Sigmoid colon (tissue), 7 donors: ENCODE measurements at regions of chr17 and their contacts with region 1.

Region 1: GRCh38 chr17:2172077-2172851 is 117.4 kb downstream of the HIC1 start:
- DNase-seq: peak; percentile 96
- H3K4me3 ChIP-seq: peak overlapping the region in 2 of 4 donors; percentile 7 to 29
- H3K27ac ChIP-seq: peak overlapping the region; percentile 82 to 95 (median 89)
- H3K4me1 ChIP-seq: peaks cover 0 to 63% (median 60%) of the 10 kb centered on the region in 4 donors
- H3K27me3 ChIP-seq: no peaks in the 10 kb centered on the region
- CTCF ChIP-seq: no peak
- EP300 ChIP-seq: peak in 3 of 4 donors; percentile 45 to 78 (median 73)
- POLR2A ChIP-seq: no peak

Region 2: GRCh38 chr17:2011411-2012371 is 160.6 kb before region 1 on chr17:
- intact Hi-C with region 1: no loop called
- DNase-seq: no peak
- H3K4me3 ChIP-seq: no peak overlapping the region
- H3K27ac ChIP-seq: peak overlapping the region; percentile 4 to 62 (median 24)
- H3K4me1 ChIP-seq: no peaks in the 10 kb centered on the region
- H3K27me3 ChIP-seq: peaks cover 0 to 8% (median 0%) of the 10 kb centered on the region in 3 donors
- CTCF ChIP-seq: no peak
- EP300 ChIP-seq: no peak
- POLR2A ChIP-seq: no peak

Region 3: DNA sequence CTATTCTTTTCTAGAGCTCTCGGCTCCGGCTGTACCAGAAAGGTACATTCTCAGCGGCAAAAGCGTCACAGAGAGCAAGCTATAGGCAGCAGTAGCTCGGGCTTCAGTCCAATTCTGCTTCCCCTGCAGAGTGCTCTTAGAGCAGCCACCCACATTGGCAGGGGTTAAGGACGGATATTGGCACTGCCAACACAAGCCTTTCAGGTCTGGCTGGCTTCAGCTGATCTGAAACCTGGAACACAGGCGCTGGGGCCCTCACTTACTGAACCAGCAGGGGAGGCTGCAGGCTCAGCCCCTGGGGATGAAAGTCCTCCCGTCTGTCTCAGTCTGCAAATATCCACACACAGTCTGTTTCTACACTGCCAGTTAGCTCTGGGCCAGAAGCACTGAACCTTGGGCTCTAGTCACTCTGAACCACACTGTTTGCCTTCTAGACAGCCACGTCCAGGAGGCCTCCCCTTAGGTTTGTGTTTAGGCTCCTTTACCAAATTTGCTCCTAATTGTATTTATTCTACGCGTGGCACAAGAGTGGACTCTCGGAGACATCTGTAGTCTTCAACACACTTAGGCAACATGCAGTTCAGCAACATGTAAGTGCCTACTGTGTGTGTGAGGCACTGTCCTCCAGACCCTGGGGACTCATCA is 77.3 kb before region 1 on chr17:
- intact Hi-C with region 1: loop called (anchors 5 kb)
- DNase-seq: peak; percentile 81
- H3K4me3 ChIP-seq: no peak overlapping the region
- H3K27ac ChIP-seq: peak overlapping the region in 3 of 4 donors; percentile 24 to 51 (median 29)
- H3K4me1 ChIP-seq: peaks cover 0 to 29% (median 21%) of the 10 kb centered on the region in 4 donors
- H3K27me3 ChIP-seq: no peaks in the 10 kb centered on the region
- CTCF ChIP-seq: peak; percentile 55 to 68 (median 65)
- EP300 ChIP-seq: no peak
- POLR2A ChIP-seq: no peak

Region 4: DNA sequence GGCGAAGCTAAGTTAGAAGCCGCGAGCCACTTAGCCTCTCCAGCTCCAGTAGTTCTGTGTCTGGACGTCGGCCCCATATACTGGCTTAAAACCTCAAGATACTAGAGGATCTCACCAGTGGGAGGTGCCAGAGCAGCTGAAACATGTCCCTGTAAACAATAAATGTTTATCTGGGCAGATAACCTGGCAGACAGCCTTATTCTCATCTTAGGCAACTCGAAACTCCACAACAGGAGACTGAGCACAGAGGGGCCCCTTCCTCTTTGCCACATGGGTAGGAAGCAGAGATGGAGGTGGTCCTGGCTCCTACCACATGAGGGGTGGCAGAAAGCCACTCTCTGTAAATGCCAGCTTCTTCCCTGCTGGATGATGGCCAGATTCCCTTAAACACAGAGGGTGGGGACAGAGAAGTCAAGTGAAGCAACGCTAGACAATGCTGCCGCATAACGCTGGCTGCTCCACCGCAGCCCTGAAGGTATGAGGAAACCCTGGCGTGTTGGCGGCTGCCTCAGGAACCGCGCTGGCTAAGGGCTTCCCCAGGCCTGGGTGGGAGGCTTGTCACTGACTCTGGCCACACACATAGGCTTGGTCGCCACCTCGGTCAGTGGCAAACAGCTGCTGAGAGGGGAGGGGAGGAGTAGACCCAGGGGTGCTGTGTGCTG is 49.5 kb before region 1 on chr17:
- intact Hi-C with region 1: loop called (anchors 5 kb)
- DNase-seq: peak; percentile 83
- H3K4me3 ChIP-seq: no peak overlapping the region
- H3K27ac ChIP-seq: peak overlapping the region; percentile 53 to 75 (median 62)
- H3K4me1 ChIP-seq: peaks cover 0 to 26% (median 25%) of the 10 kb centered on the region in 4 donors
- H3K27me3 ChIP-seq: no peaks in the 10 kb centered on the region
- CTCF ChIP-seq: no peak
- EP300 ChIP-seq: no peak
- POLR2A ChIP-seq: no peak

Region 5: DNA sequence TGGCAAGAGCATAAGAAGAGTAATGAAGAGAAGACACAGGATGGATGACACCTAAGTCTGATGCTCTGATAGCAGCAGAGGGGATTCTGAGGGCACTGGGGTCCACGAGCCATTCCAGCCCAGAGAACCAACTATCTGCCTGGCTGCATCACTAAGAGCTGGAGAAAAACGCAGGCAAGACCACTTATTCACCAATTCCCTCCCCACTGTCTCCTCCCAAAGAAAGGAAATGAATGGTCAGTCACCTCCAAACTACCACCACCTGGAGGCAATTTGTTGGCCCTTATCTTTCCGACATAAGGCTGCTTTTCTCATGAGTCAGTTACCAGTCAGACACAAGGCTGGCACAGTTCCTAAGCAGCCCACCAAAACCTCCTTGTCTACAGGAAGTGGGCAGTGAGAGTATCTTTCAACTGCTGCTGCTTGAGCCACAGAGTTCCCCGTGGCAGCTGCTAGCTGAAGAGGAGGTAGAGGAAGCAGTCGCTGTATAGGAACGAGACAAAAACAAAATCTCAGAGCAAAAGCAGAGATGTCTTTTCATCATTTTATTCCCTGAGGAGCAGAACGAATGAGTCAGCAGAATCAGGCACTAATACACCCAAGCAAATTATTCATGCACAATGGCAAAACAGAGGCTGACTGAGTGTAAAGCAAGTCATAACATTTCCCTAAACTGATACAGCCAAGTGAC is 20.2 kb after region 1 on chr17:
- intact Hi-C with region 1: no loop called
- DNase-seq: no peak
- H3K4me3 ChIP-seq: no peak overlapping the region
- H3K27ac ChIP-seq: peak overlapping the region; percentile 3 to 56 (median 38)
- H3K4me1 ChIP-seq: peaks cover 0 to 41% (median 28%) of the 10 kb centered on the region in 4 donors
- H3K27me3 ChIP-seq: no peaks in the 10 kb centered on the region
- CTCF ChIP-seq: no peak
- EP300 ChIP-seq: no peak
- POLR2A ChIP-seq: no peak

Region 6: GRCh38 chr17:2215616-2216364 is 43.5 kb after region 1 on chr17:
- intact Hi-C with region 1: loop called (anchors 2 kb)
- DNase-seq: peak; percentile 89
- H3K4me3 ChIP-seq: peak overlapping the region in 1 of 4 donors; percentile 32
- H3K27ac ChIP-seq: peak overlapping the region; percentile 72 to 87 (median 84)
- H3K4me1 ChIP-seq: peaks cover 0 to 57% (median 51%) of the 10 kb centered on the region in 4 donors
- H3K27me3 ChIP-seq: no peaks in the 10 kb centered on the region
- CTCF ChIP-seq: no peak
- EP300 ChIP-seq: peak in 1 of 4 donors; percentile 38
- POLR2A ChIP-seq: no peak

Region 7: GRCh38 chr17:2282297-2282873 is 110.1 kb after region 1 on chr17:
- intact Hi-C with region 1: no loop called
- DNase-seq: no peak
- H3K4me3 ChIP-seq: no peak overlapping the region
- H3K27ac ChIP-seq: peak overlapping the region; percentile 36 to 47 (median 42)
- H3K4me1 ChIP-seq: no peaks in the 10 kb centered on the region
- H3K27me3 ChIP-seq: no peaks in the 10 kb centered on the region
- CTCF ChIP-seq: peak; percentile 47 to 59 (median 51)
- EP300 ChIP-seq: no peak
- POLR2A ChIP-seq: no peak

Region 8: DNA sequence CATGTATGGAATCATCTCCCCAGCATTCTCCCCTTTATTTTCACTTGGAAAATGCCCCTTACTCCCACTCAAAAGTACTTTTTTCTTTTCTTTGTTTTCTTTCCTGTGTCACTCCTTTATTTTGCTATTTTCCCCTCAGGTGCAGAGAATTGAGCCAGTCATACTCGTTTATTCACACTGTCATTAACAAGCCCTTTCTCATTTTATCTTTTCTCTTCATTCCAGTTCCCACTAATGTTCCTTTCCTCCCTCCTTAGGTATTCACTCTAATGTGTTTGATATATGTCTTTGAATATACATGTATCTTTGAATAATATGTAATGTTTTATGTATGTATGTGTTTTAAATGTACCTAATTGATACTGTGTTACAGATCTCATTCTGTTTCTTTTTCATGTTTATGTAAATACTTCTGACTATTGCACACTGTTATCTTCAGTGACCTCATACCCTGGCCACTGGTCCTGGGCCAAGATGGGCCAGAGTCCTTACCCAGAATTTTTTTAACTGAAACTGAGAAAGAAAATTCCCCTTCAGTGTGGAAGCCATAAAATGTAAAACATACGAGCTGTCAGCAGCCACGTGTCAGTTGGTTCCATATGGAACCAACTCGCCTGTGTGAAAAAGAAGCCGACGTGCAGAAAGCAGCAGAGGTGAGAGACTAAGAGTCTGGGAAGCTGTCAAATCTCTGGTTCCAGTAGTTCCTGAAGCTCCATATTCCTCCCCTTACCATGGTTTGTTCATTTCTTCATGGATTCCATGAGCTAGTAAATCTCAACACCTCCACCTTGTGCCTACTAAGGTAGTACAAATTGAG is 137.3 kb after region 1 on chr17:
- intact Hi-C with region 1: no loop called
- DNase-seq: no peak
- H3K4me3 ChIP-seq: no peak overlapping the region
- H3K27ac ChIP-seq: no peak overlapping the region
- H3K4me1 ChIP-seq: peaks cover 0 to under 1% (median 0%) of the 10 kb centered on the region in 4 donors
- H3K27me3 ChIP-seq: no peaks in the 10 kb centered on the region
- CTCF ChIP-seq: no peak
- EP300 ChIP-seq: no peak
- POLR2A ChIP-seq: no peak